Left lung (tissue), 14 donors: ENCODE measurements at regions of chr17 and their contacts with region 1.

Region 1: GRCh38 chr17:38351412-38352222 is at the start of gene SOCS7:
- DNase-seq: peak; percentile 94 to 98 (median 96)
- ATAC-seq: peak; percentile 94
- H3K4me3 ChIP-seq: peak within 1 kb of the TSS; percentile 82 to 84
- H3K27ac ChIP-seq: peak within 1 kb of the TSS; percentile 71 to 86
- H3K4me1 ChIP-seq: peaks cover 8 to 40% of the 10 kb centered on the region in 2 donors
- H3K27me3 ChIP-seq: no peaks in the 10 kb centered on the region
- CTCF ChIP-seq: no peak
- polyA plus RNA-seq, gene SOCS7: 14.1 to 22.6 (median 18.7) TPM

Region 2: DNA sequence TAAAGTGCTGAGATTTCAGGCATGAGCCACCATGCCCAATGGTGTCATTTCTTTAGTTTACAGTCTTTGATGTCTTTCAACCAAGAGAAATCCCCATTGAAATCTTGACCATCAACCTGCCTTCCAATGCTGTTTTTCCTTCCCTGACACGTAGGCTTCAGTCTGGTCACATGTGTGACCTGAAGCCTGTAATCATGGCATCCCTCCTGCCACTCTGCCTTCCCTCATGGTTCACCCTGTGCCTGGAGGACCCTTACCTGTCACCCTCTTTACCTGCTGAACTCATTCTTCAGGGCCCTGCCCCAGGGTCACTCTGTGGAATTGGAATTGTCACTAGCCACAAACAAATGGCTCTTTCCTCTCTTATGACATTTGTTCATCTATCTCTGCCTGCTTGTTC is 58.6 kb after region 1 on chr17:
- intact Hi-C with region 1: loop called (anchors 5 to 10 kb)
- DNase-seq: no peak
- ATAC-seq: no peak
- H3K4me3 ChIP-seq: no peak overlapping the region
- H3K27ac ChIP-seq: no peak overlapping the region
- H3K4me1 ChIP-seq: peaks cover 0 to 8% of the 10 kb centered on the region in 2 donors
- H3K27me3 ChIP-seq: peaks cover 0 to 4% of the 10 kb centered on the region in 2 donors
- CTCF ChIP-seq: no peak

Region 3: GRCh38 chr17:38415250-38416194 is 63.9 kb after region 1 on chr17:
- intact Hi-C with region 1: loop called (anchors 5 to 10 kb)
- DNase-seq: peak in 3 of 4 donors; percentile 68 to 83 (median 78)
- ATAC-seq: peak; percentile 83
- H3K4me3 ChIP-seq: peak overlapping the region in 1 of 2 donors; percentile 22
- H3K27ac ChIP-seq: peak overlapping the region; percentile 44 to 60
- H3K4me1 ChIP-seq: peaks cover 0 to 13% of the 10 kb centered on the region in 2 donors
- H3K27me3 ChIP-seq: peaks cover 12 to 54% of the 10 kb centered on the region in 2 donors
- CTCF ChIP-seq: no peak